ENCODE measurements at regions of chr1 and their contacts with region 1.

Region 1: GRCh38 chr1:228265167-228265566 is 57.3 kb downstream of the OBSCN start:
- DNase-seq: no peak
- ATAC-seq: no peak
- H3K4me3 Mint-ChIP-seq: no peak overlapping the region
- H3K27ac Mint-ChIP-seq: no peak overlapping the region
- H3K4me1 Mint-ChIP-seq: no peaks in the 10 kb centered on the region
- H3K27me3 Mint-ChIP-seq: no peaks in the 10 kb centered on the region

Region 2: GRCh38 chr1:227299241-227299627 is 965.9 kb before region 1 on chr1:
- CTCF ChIA-PET with region 1: no interaction called
- POLR2A ChIA-PET with region 1: no interaction called
- intact Hi-C with region 1: no loop called
- DNase-seq: no peak
- ATAC-seq: no peak
- H3K4me3 Mint-ChIP-seq: no peak overlapping the region
- H3K27ac Mint-ChIP-seq: no peak overlapping the region
- H3K4me1 Mint-ChIP-seq: no peaks in the 10 kb centered on the region
- H3K27me3 Mint-ChIP-seq: no peaks in the 10 kb centered on the region

Region 3: GRCh38 chr1:228217551-228218344 is 47.4 kb before region 1 on chr1:
- CTCF ChIA-PET with region 1: no interaction called
- POLR2A ChIA-PET with region 1: no interaction called
- intact Hi-C with region 1: no loop called
- DNase-seq: no peak
- ATAC-seq: no peak
- H3K4me3 Mint-ChIP-seq: no peak overlapping the region
- H3K27ac Mint-ChIP-seq: no peak overlapping the region
- H3K4me1 Mint-ChIP-seq: no peaks in the 10 kb centered on the region
- H3K27me3 Mint-ChIP-seq: no peaks in the 10 kb centered on the region

Region 4: GRCh38 chr1:228471762-228472398 is 206.7 kb after region 1 on chr1:
- CTCF ChIA-PET with region 1: no interaction called
- POLR2A ChIA-PET with region 1: no interaction called
- intact Hi-C with region 1: no loop called
- DNase-seq: peak; percentile 28
- ATAC-seq: peak; percentile 86
- H3K4me3 Mint-ChIP-seq: no peak overlapping the region
- H3K27ac Mint-ChIP-seq: no peak overlapping the region
- H3K4me1 Mint-ChIP-seq: peaks cover 8% of the 10 kb centered on the region
- H3K27me3 Mint-ChIP-seq: peaks cover 7% of the 10 kb centered on the region

Region 5: GRCh38 chr1:229217734-229218133 is 952.6 kb after region 1 on chr1:
- CTCF ChIA-PET with region 1: no interaction called
- POLR2A ChIA-PET with region 1: interaction called, 10 read pairs
- intact Hi-C with region 1: no loop called
- DNase-seq: peak; percentile 28
- ATAC-seq: peak; percentile 73
- H3K4me3 Mint-ChIP-seq: no peak overlapping the region
- H3K27ac Mint-ChIP-seq: no peak overlapping the region
- H3K4me1 Mint-ChIP-seq: no peaks in the 10 kb centered on the region
- H3K27me3 Mint-ChIP-seq: no peaks in the 10 kb centered on the region